SK-N-SH (cell line): ENCODE measurements at regions of chr17 and their contacts with region 1.

Region 1: GRCh38 chr17:56819431-56820145 is 14.1 kb downstream of the C17orf67 start:
- DNase-seq: peak; percentile 87
- H3K4me3 ChIP-seq: no peak overlapping the region; a peak in 1 of 4 replicates
- H3K27ac ChIP-seq: no peak overlapping the region
- H3K4me1 ChIP-seq: peaks cover 5 to 6% of the 10 kb centered on the region in 2 experiments; a peak in 2 of 4 replicates
- H3K27me3 ChIP-seq: no peaks in the 10 kb centered on the region
- CTCF ChIP-seq: peak; percentile 95
- EP300 ChIP-seq: no peak
- RAD21 ChIP-seq: peak; percentile 88

Region 2: GRCh38 chr17:56392051-56392673 is 427.4 kb before region 1 on chr17:
- CTCF ChIA-PET with region 1: no interaction called
- POLR2A ChIA-PET with region 1: no interaction called
- DNase-seq: no peak
- H3K4me3 ChIP-seq: no peak overlapping the region
- H3K27ac ChIP-seq: no peak overlapping the region
- H3K4me1 ChIP-seq: no peaks in the 10 kb centered on the region
- H3K27me3 ChIP-seq: no peaks in the 10 kb centered on the region
- CTCF ChIP-seq: no peak
- EP300 ChIP-seq: no peak
- RAD21 ChIP-seq: no peak

Region 3: GRCh38 chr17:56833809-56834379 is 14.3 kb after region 1 on chr17 and contains the starts of genes C17orf67 and DGKE:
- CTCF ChIA-PET with region 1: interaction called, 32 read pairs
- POLR2A ChIA-PET with region 1: no interaction called
- DNase-seq: peak; percentile 100
- H3K4me3 ChIP-seq: peak within 1 kb of the TSS; percentile 66 to 74
- H3K27ac ChIP-seq: peak within 1 kb of the TSS; percentile 66
- H3K4me1 ChIP-seq: peaks cover 9 to 21% of the 10 kb centered on the region in 2 experiments; a peak in 3 of 4 replicates
- H3K27me3 ChIP-seq: no peaks in the 10 kb centered on the region
- CTCF ChIP-seq: no peak
- EP300 ChIP-seq: no peak; a peak in 1 of 4 replicates
- RAD21 ChIP-seq: no peak
- polyA plus RNA-seq, gene C17orf67: 1.6 and 1.7 TPM in 2 replicates
- polyA plus RNA-seq, gene DGKE: 2.4 and 2.8 TPM in 2 replicates

Region 4: GRCh38 chr17:56866496-56866895 is 46.9 kb after region 1 on chr17:
- CTCF ChIA-PET with region 1: interaction called, 15 read pairs
- POLR2A ChIA-PET with region 1: no interaction called
- DNase-seq: no peak
- H3K4me3 ChIP-seq: no peak overlapping the region
- H3K27ac ChIP-seq: no peak overlapping the region
- H3K4me1 ChIP-seq: peaks cover 0 to 5% of the 10 kb centered on the region in 2 experiments; a peak in 2 of 4 replicates
- H3K27me3 ChIP-seq: no peaks in the 10 kb centered on the region
- CTCF ChIP-seq: peak; percentile 41
- EP300 ChIP-seq: no peak
- RAD21 ChIP-seq: peak; percentile 55

Region 5: DNA sequence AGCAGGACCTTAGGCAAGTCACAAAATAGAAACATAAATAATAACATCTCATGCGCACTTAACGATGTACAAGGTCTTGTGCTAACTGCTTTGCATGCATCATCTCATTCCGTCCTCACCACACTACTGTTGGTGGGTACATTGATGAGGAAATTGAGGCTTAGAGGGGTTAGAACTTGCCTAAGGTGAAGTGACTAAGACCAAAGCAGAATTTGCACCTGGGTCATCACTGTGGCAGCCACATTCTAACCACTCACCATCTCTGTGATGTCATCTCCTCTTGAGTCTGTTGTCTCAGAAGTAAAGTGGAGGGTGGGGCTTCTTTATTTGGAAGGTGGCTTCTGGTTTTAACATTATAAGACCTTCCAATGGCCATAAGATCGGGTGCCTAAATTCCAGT is 114.7 kb after region 1 on chr17:
- CTCF ChIA-PET with region 1: interaction called, 251 read pairs
- POLR2A ChIA-PET with region 1: interaction called, 3 read pairs
- DNase-seq: no peak
- H3K4me3 ChIP-seq: no peak overlapping the region
- H3K27ac ChIP-seq: no peak overlapping the region
- H3K4me1 ChIP-seq: peaks cover 0 to 10% of the 10 kb centered on the region in 2 experiments; a peak in 1 of 4 replicates
- H3K27me3 ChIP-seq: no peaks in the 10 kb centered on the region
- CTCF ChIP-seq: no peak
- EP300 ChIP-seq: no peak
- RAD21 ChIP-seq: no peak

Region 6: DNA sequence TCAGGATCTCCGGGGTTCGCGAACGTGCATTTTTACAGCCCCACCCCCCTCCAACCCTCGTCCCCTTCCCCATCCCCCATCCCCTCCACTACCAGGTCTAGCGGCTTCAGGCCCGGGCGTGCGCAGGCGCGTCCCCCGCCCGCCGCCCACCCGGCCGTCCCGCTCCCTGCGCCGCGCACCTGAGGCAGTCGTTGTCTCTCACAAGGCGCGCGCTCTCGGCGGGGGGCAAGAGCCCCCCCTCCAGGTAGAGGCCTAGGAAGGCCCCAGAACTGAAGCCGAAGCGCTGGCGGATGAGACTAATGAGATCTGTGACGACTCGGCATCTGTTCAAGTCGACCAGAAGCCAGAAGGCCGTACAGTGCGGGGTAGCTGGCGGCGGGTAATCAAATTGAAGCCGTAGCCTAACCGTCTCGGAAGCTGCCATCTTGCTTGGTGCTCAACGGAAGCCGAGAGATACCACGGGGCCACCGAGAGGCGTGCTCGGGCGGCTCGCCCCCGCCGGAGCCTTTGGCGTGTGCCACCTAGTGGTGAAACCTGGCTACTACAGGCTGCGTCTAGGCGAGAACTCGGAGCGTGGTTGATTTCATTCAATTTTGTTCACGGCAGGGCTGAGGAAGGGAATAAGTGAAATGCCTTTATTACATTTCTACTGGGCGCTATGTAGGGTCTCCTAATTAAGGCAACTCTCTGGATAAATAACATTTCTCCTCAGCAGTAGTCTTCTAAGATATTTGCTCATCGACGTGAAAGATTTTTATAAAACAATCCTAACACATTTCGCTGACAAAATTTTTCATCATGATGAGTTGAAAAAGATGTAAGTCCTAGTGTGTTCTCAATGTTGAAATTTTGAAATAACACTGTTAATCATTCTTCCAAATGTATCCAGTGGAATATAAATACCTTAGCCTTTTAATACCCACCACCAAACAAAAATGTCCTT is 141.3 kb after region 1 on chr17 and contains the start of gene COIL:
- CTCF ChIA-PET with region 1: interaction called, 14 read pairs
- POLR2A ChIA-PET with region 1: no interaction called
- DNase-seq: peak; percentile 97
- H3K4me3 ChIP-seq: peak within 1 kb of the TSS; percentile 60 to 98
- H3K27ac ChIP-seq: peak within 1 kb of the TSS; percentile 94 to 95
- H3K4me1 ChIP-seq: peaks cover 8 to 10% of the 10 kb centered on the region in 2 experiments; a peak in 2 of 4 replicates
- H3K27me3 ChIP-seq: no peaks in the 10 kb centered on the region
- CTCF ChIP-seq: peak; percentile 100
- EP300 ChIP-seq: peak in 1 of 2 experiments; percentile 53; a peak in 2 of 4 replicates
- RAD21 ChIP-seq: peak; percentile 75
- polyA plus RNA-seq, gene COIL: 3.9 and 5.7 TPM in 2 replicates